GM12878 (cell line): ENCODE measurements at regions of chr5 and their contacts with region 1.

Region 1: DNA sequence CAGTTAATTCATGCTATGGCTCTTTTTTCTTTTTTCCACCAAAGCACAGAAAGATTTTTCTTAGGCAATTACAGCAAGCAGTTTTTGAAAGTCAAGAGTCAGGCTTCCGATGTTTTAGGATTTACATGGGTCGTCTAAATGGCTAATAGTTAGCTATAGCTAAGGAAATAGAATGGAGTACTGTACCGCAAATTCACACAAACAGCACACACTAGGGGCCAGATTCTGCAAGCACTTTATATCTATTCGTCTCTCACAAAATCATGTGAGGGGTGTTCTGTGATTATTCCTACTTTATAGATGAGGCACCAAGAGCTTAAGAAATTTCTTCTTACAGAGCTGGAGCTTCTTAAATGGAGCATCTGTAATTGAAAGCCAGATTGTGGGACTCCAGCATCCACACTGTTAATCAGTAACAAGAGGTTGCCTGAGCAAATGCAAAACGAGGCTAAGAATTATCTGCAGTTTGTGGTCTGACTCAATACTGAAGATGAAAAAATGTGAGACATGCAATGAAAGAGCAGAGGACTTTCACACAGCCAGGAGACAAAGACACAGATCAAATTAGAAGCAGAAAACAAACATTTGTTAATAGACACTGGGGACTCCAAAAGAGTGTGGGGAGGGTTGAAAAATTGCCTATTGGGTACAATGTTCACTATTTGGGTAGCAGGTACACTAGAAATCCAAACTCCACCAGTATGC is 62.7 kb upstream of the CTXN3 start:
- DNase-seq: peak; percentile 79
- ATAC-seq: peak; percentile 69
- H3K4me3 ChIP-seq: 0 out of 2 replicates have a peak overlapping the region, but pooled peaks have one; percentile 13
- H3K27ac ChIP-seq: peak overlapping the region; percentile 56; the same call in 1 of the 2 replicates
- H3K4me1 ChIP-seq: peaks cover 35% of the 10 kb centered on the region
- H3K27me3 ChIP-seq: no peaks in the 10 kb centered on the region
- CTCF ChIP-seq: no peak
- EP300 ChIP-seq: peak; percentile 84 to 86
- POLR2A ChIP-seq: no peak
- RAD21 ChIP-seq: no peak

Region 2: DNA sequence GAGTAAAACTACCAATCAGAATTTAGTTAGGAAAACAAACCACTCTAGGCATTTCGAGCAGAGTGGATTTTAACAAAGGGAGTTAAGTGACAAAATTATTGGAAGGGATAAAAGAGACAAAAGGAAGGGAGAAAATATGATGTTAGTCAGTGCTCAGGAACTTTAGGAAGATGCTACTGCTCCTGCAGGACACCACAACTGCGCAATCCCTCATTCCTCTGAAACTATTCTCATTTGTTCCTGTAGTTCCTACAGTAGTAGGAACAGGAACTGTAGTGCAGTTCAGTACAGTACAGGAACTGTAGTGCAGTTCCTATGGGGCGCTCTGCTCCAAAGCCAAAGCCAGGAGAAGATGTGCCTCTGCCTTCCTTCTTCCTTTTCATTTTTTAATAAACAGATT is 325.5 kb before region 1 on chr5:
- CTCF ChIA-PET with region 1: no interaction called
- POLR2A ChIA-PET with region 1: no interaction called
- RAD21 ChIA-PET with region 1: no interaction called
- SMC1A ChIA-PET with region 1: no interaction called
- in situ Hi-C with region 1: no loop called
- intact Hi-C with region 1: no loop called
- DNase-seq: no peak
- ATAC-seq: no peak
- H3K4me3 ChIP-seq: no peak overlapping the region
- H3K27ac ChIP-seq: no peak overlapping the region
- H3K4me1 ChIP-seq: no peaks in the 10 kb centered on the region
- H3K27me3 ChIP-seq: no peaks in the 10 kb centered on the region
- CTCF ChIP-seq: no peak
- EP300 ChIP-seq: no peak
- POLR2A ChIP-seq: no peak
- RAD21 ChIP-seq: no peak

Region 3: GRCh38 chr5:127572930-127573329 is 13.3 kb before region 1 on chr5:
- CTCF ChIA-PET with region 1: interaction called, 104 read pairs
- POLR2A ChIA-PET with region 1: interaction called, 65 read pairs
- RAD21 ChIA-PET with region 1: interaction called, 249 read pairs
- SMC1A ChIA-PET with region 1: interaction called, 177 read pairs
- in situ Hi-C with region 1: no loop called
- intact Hi-C with region 1: no loop called
- DNase-seq: no peak
- ATAC-seq: peak; percentile 62
- H3K4me3 ChIP-seq: no peak overlapping the region
- H3K27ac ChIP-seq: no peak overlapping the region
- H3K4me1 ChIP-seq: peaks cover 18% of the 10 kb centered on the region
- H3K27me3 ChIP-seq: no peaks in the 10 kb centered on the region
- CTCF ChIP-seq: peak; percentile 7 to 33 (median 17); a peak in 2 of 6 replicates
- EP300 ChIP-seq: no peak
- POLR2A ChIP-seq: no peak
- RAD21 ChIP-seq: peak; percentile 32; the same call in 1 of the 2 replicates

Region 4: DNA sequence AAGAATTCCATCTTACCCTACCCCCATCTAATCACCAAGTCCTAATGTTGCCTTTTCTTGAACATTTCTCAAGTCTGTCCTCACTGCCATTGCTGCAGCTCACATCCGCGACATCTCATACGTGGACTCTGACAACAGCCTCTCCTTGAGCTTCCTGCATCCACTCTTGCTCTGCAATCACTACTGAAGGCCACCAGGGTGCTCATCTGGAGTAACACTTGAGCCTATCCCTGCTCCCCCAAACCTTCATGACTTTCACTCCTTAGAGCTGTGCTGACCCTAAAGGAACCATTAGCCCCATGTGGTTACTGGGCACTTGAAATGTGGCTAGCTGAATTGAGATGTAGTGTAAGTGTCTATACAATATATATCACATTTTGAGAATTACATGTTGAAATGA is 16.3 kb after region 1 on chr5:
- CTCF ChIA-PET with region 1: interaction called, 9 read pairs
- POLR2A ChIA-PET with region 1: interaction called, 8 read pairs
- RAD21 ChIA-PET with region 1: interaction called, 13 read pairs
- SMC1A ChIA-PET with region 1: interaction called, 111 read pairs
- in situ Hi-C with region 1: no loop called
- intact Hi-C with region 1: no loop called
- DNase-seq: no peak
- ATAC-seq: peak; percentile 38
- H3K4me3 ChIP-seq: no peak overlapping the region
- H3K27ac ChIP-seq: no peak overlapping the region
- H3K4me1 ChIP-seq: no peaks in the 10 kb centered on the region
- H3K27me3 ChIP-seq: 0 out of 4 replicates have a peak, but pooled peaks cover 0 to 3% of the 10 kb centered on the region in 2 experiments
- CTCF ChIP-seq: no peak
- EP300 ChIP-seq: no peak
- POLR2A ChIP-seq: no peak
- RAD21 ChIP-seq: no peak

Region 5: GRCh38 chr5:127612441-127613141 is 26.4 kb after region 1 on chr5:
- CTCF ChIA-PET with region 1: interaction called, 3 read pairs
- POLR2A ChIA-PET with region 1: no interaction called
- RAD21 ChIA-PET with region 1: interaction called, 12 read pairs
- SMC1A ChIA-PET with region 1: interaction called, 5 read pairs
- in situ Hi-C with region 1: no loop called
- intact Hi-C with region 1: no loop called
- DNase-seq: no peak
- ATAC-seq: no peak
- H3K4me3 ChIP-seq: no peak overlapping the region
- H3K27ac ChIP-seq: no peak overlapping the region
- H3K4me1 ChIP-seq: no peaks in the 10 kb centered on the region
- H3K27me3 ChIP-seq: no peaks in the 10 kb centered on the region
- CTCF ChIP-seq: no peak
- EP300 ChIP-seq: no peak
- POLR2A ChIP-seq: no peak
- RAD21 ChIP-seq: no peak

Region 6: GRCh38 chr5:127683008-127683407 is 96.8 kb after region 1 on chr5:
- CTCF ChIA-PET with region 1: no interaction called
- POLR2A ChIA-PET with region 1: no interaction called
- RAD21 ChIA-PET with region 1: no interaction called
- SMC1A ChIA-PET with region 1: no interaction called
- in situ Hi-C with region 1: no loop called
- intact Hi-C with region 1: no loop called
- DNase-seq: no peak
- ATAC-seq: no peak
- H3K4me3 ChIP-seq: no peak overlapping the region
- H3K27ac ChIP-seq: no peak overlapping the region
- H3K4me1 ChIP-seq: no peaks in the 10 kb centered on the region
- H3K27me3 ChIP-seq: no peaks in the 10 kb centered on the region
- CTCF ChIP-seq: no peak
- EP300 ChIP-seq: no peak
- POLR2A ChIP-seq: no peak
- RAD21 ChIP-seq: no peak